ENCODE measurements at regions of chr1 and their contacts with region 1.

Region 1: DNA sequence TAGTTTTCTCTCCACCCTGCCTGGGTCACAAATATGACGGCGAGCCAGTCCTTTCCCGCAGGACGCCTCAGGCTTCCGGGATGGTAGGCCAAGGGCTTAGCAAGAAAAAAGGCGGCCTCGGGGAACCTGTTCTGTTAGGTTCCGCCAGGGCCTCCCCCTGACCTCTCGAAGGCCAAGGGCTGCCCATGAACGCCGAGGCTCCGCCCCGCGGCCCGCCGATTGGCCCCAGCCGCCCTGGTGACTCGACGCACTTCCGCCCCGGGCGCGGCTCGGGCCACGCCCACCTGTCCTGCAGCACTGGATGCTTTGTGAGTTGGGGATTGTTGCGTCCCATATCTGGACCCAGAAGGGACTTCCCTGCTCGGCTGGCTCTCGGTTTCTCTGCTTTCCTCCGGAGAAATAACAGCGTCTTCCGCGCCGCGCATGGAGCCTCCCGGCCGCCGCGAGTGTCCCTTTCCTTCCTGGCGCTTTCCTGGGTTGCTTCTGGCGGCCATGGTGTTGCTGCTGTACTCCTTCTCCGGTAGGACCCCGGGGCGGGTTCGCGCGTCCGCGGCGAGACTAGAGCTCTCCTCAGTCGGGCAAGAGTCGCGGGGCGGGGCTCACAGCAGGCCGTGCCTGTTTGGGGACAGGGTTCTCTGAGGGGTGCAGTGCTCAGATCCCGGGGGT is at the start of gene CD46:
- DNase-seq: peak; percentile 96
- H3K4me3 Mint-ChIP-seq: peak within 1 kb of the TSS; percentile 100
- H3K27ac Mint-ChIP-seq: peak within 1 kb of the TSS; percentile 93
- H3K4me1 Mint-ChIP-seq: peaks cover 67% of the 10 kb centered on the region
- H3K27me3 Mint-ChIP-seq: no peaks in the 10 kb centered on the region
- total RNA-seq, gene CD46: 140 to 145 TPM

Region 2: DNA sequence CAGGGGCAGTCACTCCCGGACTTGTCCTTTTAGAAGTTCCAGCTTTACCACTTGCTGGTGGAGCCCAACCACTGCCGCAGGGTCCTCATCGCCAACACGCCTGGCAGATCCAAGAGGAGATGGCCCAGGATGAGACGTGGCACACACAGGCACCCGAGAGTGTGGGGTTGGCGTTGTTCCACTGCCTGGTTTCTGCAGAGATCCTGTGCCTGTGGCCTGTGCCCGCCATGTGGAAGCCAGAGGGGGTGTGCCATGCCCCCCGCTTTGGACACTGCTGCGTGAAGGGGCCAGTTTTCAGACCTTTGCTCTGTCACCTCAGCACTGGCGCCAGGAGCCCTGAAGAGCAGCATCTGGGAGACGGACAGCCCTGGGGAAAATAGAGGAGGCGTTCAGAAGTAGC is 10.7 kb after region 1 on chr1:
- CTCF ChIA-PET with region 1: no interaction called
- POLR2A ChIA-PET with region 1: no interaction called
- DNase-seq: no peak
- H3K4me3 Mint-ChIP-seq: no peak overlapping the region
- H3K27ac Mint-ChIP-seq: no peak overlapping the region
- H3K4me1 Mint-ChIP-seq: peaks cover 5% of the 10 kb centered on the region
- H3K27me3 Mint-ChIP-seq: no peaks in the 10 kb centered on the region

Region 3: GRCh38 chr1:207876131-207876530 is 124.2 kb after region 1 on chr1:
- CTCF ChIA-PET with region 1: no interaction called
- POLR2A ChIA-PET with region 1: interaction called, 10 read pairs
- DNase-seq: no peak
- H3K4me3 Mint-ChIP-seq: no peak overlapping the region
- H3K27ac Mint-ChIP-seq: no peak overlapping the region
- H3K4me1 Mint-ChIP-seq: peaks cover 59% of the 10 kb centered on the region
- H3K27me3 Mint-ChIP-seq: no peaks in the 10 kb centered on the region